Breast epithelium (tissue), 4 donors: ENCODE measurements at regions of chr22 and their contacts with region 1.

Region 1: DNA sequence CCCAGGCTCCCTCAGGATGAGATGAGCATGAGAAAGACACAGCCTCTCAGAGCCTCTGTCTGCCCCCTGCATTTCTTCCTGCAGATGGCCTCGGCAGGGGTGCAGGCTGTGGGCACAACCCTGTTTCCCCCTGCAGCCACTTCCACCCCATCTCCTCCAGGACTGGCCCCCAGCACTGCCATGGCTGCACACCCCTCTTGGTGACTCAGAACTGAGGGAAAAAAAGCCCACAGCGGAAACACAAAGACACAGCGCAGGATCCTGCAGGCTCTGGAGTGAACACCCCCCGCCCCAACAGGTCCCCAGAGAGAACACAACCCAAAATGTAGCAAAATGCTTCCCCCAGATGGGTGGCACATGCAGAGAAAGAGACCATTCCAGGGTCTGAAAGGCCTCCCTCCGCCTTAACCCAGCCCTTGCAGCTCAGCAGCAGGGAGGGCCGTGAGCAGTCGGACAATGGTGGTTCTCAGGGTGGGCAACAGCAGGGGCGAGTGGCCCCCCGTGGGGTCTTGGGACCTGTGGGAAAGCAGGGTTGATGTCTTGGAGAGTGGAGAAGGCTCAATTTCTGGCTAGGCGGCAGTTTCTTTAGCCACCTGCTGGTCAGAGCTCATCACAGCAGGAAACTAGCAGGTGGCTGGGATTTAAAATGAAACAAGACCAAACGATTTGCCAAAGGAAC is 8.0 kb downstream of the TUBGCP6 start:
- DNase-seq: no peak
- H3K4me3 ChIP-seq: no peak overlapping the region
- H3K27ac ChIP-seq: no peak overlapping the region
- H3K4me1 ChIP-seq: peaks cover 0 to 8% of the 10 kb centered on the region in 2 donors
- H3K27me3 ChIP-seq: no peaks in the 10 kb centered on the region
- CTCF ChIP-seq: no peak
- POLR2A ChIP-seq: no peak

Region 2: DNA sequence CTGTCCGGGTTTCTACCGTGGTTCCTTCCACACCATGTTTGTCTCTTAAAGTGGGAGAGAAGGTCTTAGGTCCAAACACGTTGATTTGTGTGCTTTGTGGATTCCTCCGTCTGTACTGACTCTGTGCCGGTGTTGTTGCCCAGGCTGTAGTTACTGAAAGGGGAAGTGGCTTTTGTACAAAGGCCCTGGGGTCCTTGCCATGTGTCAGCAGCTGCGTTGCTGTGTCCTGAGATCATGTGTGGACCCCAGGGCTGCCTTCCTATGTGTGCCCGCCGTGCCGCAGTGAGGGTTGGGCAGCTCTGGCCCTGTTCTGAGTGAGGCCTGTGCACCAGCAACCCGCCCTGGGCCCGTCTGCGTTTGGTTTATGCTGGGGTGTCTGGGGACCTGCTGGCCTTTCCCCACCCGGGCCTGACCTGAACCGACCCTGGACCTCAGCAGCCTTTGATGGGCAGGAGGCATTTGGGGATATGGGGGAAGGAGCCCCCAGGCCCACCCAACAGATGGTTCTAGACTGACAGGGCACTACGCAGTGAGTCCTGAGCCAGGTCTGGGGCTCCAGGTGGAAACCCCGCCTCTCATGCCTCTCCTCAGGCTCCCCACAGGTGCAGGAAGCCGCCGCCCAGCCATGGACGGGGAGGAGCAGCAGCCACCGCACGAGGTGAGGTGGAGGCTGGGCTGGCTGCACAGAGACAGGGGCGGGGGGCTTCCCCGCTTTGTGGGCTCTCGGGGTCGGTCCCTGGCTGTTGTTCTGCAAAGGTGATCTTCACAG is 44.2 kb before region 1 on chr22:
- intact Hi-C with region 1: loop called (anchors 1 kb)
- DNase-seq: no peak
- H3K4me3 ChIP-seq: no peak overlapping the region
- H3K27ac ChIP-seq: no peak overlapping the region
- H3K4me1 ChIP-seq: peaks cover 13 to 20% of the 10 kb centered on the region in 2 donors
- H3K27me3 ChIP-seq: no peaks in the 10 kb centered on the region
- CTCF ChIP-seq: no peak
- POLR2A ChIP-seq: no peak